Right ventricle myocardium inferior (tissue), 1 donor: ENCODE measurements at regions of chr9 and their contacts with region 1.

Region 1: DNA sequence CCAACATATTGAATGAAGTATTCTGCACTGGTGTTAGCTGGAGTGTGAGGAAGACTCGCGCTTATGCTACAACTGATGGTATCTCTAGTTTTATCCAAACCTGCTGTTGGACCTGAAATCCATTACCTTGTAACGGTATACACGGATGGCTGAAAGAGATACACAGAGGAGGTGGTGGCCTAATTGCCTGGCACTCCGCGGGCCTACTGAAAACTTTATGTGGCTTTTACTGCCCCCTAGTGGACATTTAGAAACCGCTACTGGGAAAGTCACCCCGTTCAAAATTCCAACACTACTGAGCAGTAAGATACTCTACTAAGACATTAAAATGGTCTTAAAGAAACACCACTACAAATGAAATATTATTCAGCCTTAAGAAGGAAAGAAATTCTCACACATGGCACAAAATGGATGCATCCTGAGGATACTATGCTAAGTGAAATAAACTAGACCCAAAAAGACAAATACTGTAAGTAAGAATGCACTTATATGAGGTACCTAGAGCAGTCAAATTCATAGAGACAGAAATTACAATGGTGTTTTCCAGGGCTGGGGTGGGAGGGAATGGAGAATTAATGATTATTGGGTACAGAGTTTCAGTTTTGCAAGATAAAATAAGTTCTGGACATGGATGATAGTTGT is 100.4 kb downstream of the TTLL11 start:
- DNase-seq: peak; percentile 81
- ATAC-seq: peak; percentile 68

Region 2: DNA sequence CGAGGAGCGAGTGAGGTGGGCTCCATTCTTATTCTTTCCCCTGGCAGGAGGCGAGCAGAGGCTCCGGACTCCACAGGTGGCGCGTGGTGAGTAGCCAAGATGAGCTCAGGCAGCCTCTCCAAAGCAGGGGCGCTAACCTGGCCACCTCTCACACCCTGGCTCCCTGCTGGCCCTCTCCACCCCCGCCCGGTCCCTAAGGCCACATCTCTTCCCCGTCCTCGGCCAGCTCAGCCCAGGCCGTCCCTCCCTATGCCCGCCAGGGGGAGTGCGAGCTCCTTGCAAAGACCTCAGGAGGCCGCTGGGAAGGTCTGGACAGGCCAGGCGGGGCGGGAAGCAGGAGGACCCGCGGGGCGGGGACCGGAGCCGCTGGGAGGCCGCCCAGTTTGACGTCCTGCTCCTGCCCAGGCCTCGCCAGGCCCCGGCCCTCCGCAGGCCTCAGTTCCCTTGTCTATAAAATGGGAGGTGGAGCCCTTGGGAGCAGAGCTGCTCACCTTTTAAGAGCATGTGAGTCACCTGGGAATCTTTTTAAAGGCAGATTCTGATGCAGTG is 446.7 kb before region 1 on chr9:
- intact Hi-C with region 1: loop called (anchors 1 kb)
- DNase-seq: peak; percentile 97
- ATAC-seq: peak; percentile 93

Region 3: DNA sequence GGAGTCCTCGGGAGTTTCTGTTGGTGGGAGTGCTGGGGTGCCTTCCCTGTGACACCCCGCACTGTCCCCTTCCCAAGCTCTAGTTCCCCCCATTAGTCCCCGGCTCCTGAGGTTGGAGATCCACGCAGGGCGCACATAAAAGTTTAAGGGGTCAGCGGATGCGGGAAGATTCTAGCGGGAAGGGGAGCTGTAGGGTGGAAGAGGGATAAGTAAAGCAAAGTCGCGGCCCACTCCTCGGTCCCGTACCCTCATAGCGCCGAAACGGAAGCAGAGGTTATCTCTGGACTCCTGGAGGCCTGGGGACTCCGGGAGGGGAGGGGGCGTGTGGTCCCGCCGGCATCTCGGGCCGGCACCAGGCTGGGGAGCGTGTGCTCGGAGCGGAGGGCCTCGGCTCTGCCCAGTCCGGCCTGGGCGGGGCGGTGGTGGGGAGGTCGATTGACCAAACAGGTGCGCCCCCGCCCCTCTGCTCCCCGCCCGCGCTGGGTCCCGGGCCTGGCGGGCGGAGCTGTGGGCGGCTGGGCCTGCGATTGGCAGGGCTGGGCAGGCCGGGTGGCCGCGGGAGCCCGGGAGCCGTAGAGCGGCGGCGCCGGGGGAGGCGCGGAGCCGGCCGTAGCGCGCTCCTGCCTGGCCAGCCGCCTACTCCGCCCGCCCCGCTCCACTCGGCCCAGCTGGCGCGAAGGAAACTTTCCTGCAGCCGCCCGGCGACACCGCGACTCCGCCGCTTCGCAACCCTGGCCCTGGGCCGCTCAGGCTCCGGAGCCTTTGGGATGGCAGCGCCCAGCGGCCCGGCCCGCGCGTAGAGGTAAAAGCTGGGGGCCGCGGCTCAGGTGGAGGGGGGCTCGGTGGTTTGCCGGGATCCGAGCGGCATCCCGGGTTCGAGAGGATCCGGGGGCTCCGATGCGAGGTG is 393.5 kb before region 1 on chr9:
- intact Hi-C with region 1: loop called (anchors 5 kb)
- DNase-seq: peak; percentile 86
- ATAC-seq: peak; percentile 86

Region 4: GRCh38 chr9:121634329-121635261 is 358.1 kb before region 1 on chr9:
- intact Hi-C with region 1: loop called (anchors 5 kb)
- DNase-seq: no peak
- ATAC-seq: peak; percentile 61

Region 5: GRCh38 chr9:121686930-121687541 is 305.7 kb before region 1 on chr9:
- intact Hi-C with region 1: loop called (anchors 1 kb)
- DNase-seq: peak; percentile 82
- ATAC-seq: peak; percentile 77

Region 6: GRCh38 chr9:121698627-121699570 is 293.8 kb before region 1 on chr9:
- intact Hi-C with region 1: loop called (anchors 5 kb)
- DNase-seq: peak; percentile 86
- ATAC-seq: peak; percentile 18